ENCODE measurements at regions of chr18 and their contacts with region 1.

Region 1: GRCh38 chr18:35386600-35387351 is 9.6 kb upstream of the ZNF396 start:
- DNase-seq: peak in 8 of 9 donors; percentile 45 to 78 (median 72)
- ATAC-seq: peak; percentile 95
- H3K4me3 ChIP-seq: no peak overlapping the region
- H3K4me3 Mint-ChIP-seq: peak overlapping the region in 1 of 10 donors; percentile 26
- H3K27ac ChIP-seq: no peak overlapping the region
- H3K27ac Mint-ChIP-seq: peak overlapping the region in 1 of 9 donors; percentile 48
- H3K4me1 ChIP-seq: no peaks in the 10 kb centered on the region
- H3K4me1 Mint-ChIP-seq: peaks cover 0 to 11% (median 5%) of the 10 kb centered on the region in 7 donors
- H3K27me3 ChIP-seq: no peaks in the 10 kb centered on the region
- H3K27me3 Mint-ChIP-seq: peaks cover 13 to 41% (median 28%) of the 10 kb centered on the region in 5 donors

Region 2: DNA sequence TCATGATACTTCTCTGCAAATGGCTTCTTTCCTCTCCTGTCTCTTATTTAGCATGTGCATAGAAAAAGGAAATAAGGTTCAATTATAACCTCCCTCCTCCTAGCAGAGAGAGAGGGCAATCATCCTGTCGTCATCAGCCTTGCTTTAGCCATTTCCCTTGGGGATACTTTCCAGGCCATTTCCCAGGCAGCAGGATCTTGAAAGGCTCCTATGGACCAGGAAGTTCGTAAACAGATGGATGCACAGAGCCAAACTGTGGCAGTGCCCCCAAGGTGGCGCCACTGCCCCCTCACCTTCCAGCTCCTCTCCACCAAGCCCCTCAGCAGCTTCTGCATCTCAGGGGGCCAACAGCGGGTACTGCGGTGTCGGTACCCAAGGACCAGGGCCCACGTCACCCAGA is 519.3 kb before region 1 on chr18:
- CTCF ChIA-PET with region 1: no interaction called
- POLR2A ChIA-PET with region 1: no interaction called
- intact Hi-C with region 1: loop called in 1 of 2 experiments (anchors 5 kb)
- DNase-seq: no peak
- ATAC-seq: no peak
- H3K4me3 ChIP-seq: no peak overlapping the region
- H3K4me3 Mint-ChIP-seq: no peak overlapping the region
- H3K27ac ChIP-seq: no peak overlapping the region
- H3K27ac Mint-ChIP-seq: no peak overlapping the region
- H3K4me1 ChIP-seq: no peaks in the 10 kb centered on the region
- H3K4me1 Mint-ChIP-seq: peaks cover 0 to 24% (median 9%) of the 10 kb centered on the region in 7 donors
- H3K27me3 ChIP-seq: no peaks in the 10 kb centered on the region
- H3K27me3 Mint-ChIP-seq: peaks cover 0 to 10% (median 0%) of the 10 kb centered on the region in 5 donors

Region 3: GRCh38 chr18:35005963-35006577 is 380.7 kb before region 1 on chr18:
- CTCF ChIA-PET with region 1: interaction called, 3 read pairs
- POLR2A ChIA-PET with region 1: no interaction called
- intact Hi-C with region 1: loop called (anchors 2 kb)
- DNase-seq: peak in 7 of 9 donors; percentile 29 to 66 (median 54)
- ATAC-seq: peak; percentile 80
- H3K4me3 ChIP-seq: no peak overlapping the region
- H3K4me3 Mint-ChIP-seq: no peak overlapping the region
- H3K27ac ChIP-seq: no peak overlapping the region
- H3K27ac Mint-ChIP-seq: no peak overlapping the region
- H3K4me1 ChIP-seq: no peaks in the 10 kb centered on the region
- H3K4me1 Mint-ChIP-seq: no peaks in the 10 kb centered on the region
- H3K27me3 ChIP-seq: no peaks in the 10 kb centered on the region
- H3K27me3 Mint-ChIP-seq: no peaks in the 10 kb centered on the region

Region 4: DNA sequence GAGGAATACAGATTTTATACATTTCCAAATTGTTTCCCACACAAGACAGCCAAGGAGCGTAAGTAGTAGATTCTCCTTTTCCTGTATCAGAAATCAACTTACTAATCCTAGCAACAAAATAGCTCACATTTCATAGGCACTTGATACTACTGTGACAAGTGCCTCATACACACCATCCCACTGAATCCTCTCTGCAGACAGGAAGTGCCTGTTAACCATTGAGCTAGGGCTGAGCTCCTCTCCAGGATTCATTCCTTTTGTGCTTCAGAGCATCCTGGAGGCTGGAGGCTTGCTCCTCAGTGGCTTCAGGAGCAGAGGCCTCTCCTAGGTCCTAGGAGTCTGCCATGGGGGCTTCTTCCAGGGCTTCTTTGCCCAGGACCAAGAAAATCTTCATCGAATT is 11.2 kb after region 1 on chr18:
- CTCF ChIA-PET with region 1: no interaction called
- POLR2A ChIA-PET with region 1: no interaction called
- intact Hi-C with region 1: no loop called
- DNase-seq: no peak
- ATAC-seq: no peak
- H3K4me3 ChIP-seq: no peak overlapping the region
- H3K4me3 Mint-ChIP-seq: no peak overlapping the region
- H3K27ac ChIP-seq: no peak overlapping the region
- H3K27ac Mint-ChIP-seq: no peak overlapping the region
- H3K4me1 ChIP-seq: no peaks in the 10 kb centered on the region
- H3K4me1 Mint-ChIP-seq: no peaks in the 10 kb centered on the region
- H3K27me3 ChIP-seq: no peaks in the 10 kb centered on the region
- H3K27me3 Mint-ChIP-seq: peaks cover 11 to 33% (median 20%) of the 10 kb centered on the region in 5 donors

Region 5: GRCh38 chr18:35407871-35408481 is 21.2 kb after region 1 on chr18:
- CTCF ChIA-PET with region 1: no interaction called
- POLR2A ChIA-PET with region 1: no interaction called
- intact Hi-C with region 1: loop called in 1 of 2 experiments (anchors 2 kb)
- DNase-seq: peak in 7 of 9 donors; percentile 14 to 70 (median 60)
- ATAC-seq: peak; percentile 90
- H3K4me3 ChIP-seq: no peak overlapping the region
- H3K4me3 Mint-ChIP-seq: no peak overlapping the region
- H3K27ac ChIP-seq: no peak overlapping the region
- H3K27ac Mint-ChIP-seq: no peak overlapping the region
- H3K4me1 ChIP-seq: peaks cover 0 to 4% of the 10 kb centered on the region in 2 donors
- H3K4me1 Mint-ChIP-seq: peaks cover 10 to 35% (median 17%) of the 10 kb centered on the region in 7 donors
- H3K27me3 ChIP-seq: no peaks in the 10 kb centered on the region
- H3K27me3 Mint-ChIP-seq: peaks cover 0 to 15% (median 7%) of the 10 kb centered on the region in 5 donors

Region 6: DNA sequence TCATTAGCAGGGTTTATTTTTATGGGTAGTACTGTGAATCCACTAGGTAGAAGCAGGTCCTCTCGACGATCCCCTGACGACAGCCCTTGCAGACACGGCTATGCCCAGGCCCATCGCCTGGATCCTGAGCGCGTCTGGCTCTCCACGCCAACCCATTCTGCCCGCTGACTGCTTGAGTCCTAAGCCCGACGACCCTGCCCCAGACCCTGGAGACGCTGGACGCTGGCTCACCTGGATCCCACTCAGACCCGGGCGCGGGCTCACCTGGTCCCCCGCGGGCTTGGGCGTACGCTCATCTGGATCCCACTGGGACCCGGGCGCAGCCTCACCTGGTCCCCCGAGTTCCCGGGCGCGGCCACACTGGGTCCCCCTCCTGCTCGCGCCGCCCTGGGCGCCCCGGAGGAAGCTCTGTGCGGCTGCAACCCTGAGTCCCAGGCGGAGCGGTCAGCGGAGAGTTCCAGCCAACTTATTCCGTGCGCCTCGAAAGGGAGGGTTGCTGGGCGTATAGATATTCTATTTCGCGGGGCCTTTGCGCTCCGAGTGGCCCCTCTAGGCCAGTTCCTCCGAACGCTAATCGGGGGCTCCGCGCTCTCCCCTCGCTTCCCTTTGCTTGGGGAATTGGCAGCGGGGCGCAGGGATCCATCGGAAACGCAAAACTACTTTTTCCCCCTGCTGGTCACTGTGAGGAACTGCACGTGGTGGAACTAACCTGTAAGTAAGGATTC is 563.3 kb after region 1 on chr18:
- CTCF ChIA-PET with region 1: no interaction called
- POLR2A ChIA-PET with region 1: no interaction called
- intact Hi-C with region 1: loop called (anchors 1 to 5 kb)
- DNase-seq: peak; percentile 36 to 68 (median 57)
- ATAC-seq: peak; percentile 89
- H3K4me3 ChIP-seq: peak overlapping the region; percentile 70
- H3K4me3 Mint-ChIP-seq: peak overlapping the region; percentile 78 to 93 (median 88)
- H3K27ac ChIP-seq: no peak overlapping the region
- H3K27ac Mint-ChIP-seq: peak overlapping the region in 4 of 9 donors; percentile 21 to 59 (median 28)
- H3K4me1 ChIP-seq: peaks cover 4 to 8% of the 10 kb centered on the region in 2 donors
- H3K4me1 Mint-ChIP-seq: peaks cover 0 to 9% (median 4%) of the 10 kb centered on the region in 7 donors
- H3K27me3 ChIP-seq: peaks cover 0 to 4% of the 10 kb centered on the region in 2 donors
- H3K27me3 Mint-ChIP-seq: peaks cover 14 to 33% (median 24%) of the 10 kb centered on the region in 5 donors

Region 7: DNA sequence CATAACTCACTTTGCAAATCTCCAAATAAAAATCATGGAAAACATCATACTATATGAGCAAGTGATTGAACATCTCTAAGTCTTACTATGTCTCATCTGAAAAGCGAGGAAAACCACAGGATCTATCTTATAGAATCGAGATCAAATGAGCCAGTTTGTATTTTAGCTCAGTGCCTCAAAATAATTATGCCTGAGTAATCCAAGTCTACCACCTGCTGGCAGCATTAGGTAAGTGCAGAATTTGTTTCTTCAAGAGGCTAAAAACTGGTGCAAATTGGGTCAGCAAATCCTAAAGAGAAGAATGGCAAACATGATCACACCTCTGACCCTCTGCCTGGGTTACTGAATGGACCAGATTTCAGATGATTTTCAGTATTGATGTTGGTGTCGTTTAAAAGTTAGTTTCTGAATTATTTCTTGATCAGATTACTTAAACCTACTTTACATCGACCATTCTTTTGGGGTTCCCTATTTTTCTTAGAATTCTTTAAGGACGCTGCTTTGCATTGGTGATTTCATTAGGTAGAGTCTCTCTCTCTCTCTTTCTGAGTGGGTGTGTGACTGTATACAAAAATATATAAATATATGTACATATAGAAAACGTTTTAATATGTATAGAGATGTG is 898.0 kb after region 1 on chr18:
- CTCF ChIA-PET with region 1: no interaction called
- POLR2A ChIA-PET with region 1: no interaction called
- intact Hi-C with region 1: loop called in 1 of 2 experiments (anchors 1 kb)
- DNase-seq: peak in 7 of 9 donors; percentile 20 to 61 (median 54)
- ATAC-seq: peak; percentile 67
- H3K4me3 ChIP-seq: no peak overlapping the region
- H3K4me3 Mint-ChIP-seq: no peak overlapping the region
- H3K27ac ChIP-seq: no peak overlapping the region
- H3K27ac Mint-ChIP-seq: no peak overlapping the region
- H3K4me1 ChIP-seq: no peaks in the 10 kb centered on the region
- H3K4me1 Mint-ChIP-seq: peaks cover 0 to 4% (median 0%) of the 10 kb centered on the region in 7 donors
- H3K27me3 ChIP-seq: no peaks in the 10 kb centered on the region
- H3K27me3 Mint-ChIP-seq: peaks cover 30 to 59% (median 33%) of the 10 kb centered on the region in 5 donors

Region 8: GRCh38 chr18:36828630-36829361 is 1442.0 kb after region 1 on chr18 and contains the starts of genes KIAA1328 and TPGS2:
- CTCF ChIA-PET with region 1: no interaction called
- POLR2A ChIA-PET with region 1: no interaction called
- intact Hi-C with region 1: loop called in 1 of 2 experiments (anchors 5 kb)
- DNase-seq: peak; percentile 77 to 90 (median 87)
- ATAC-seq: peak; percentile 96
- H3K4me3 ChIP-seq: peak within 1 kb of the TSS; percentile 79
- H3K4me3 Mint-ChIP-seq: peak within 1 kb of the TSS; percentile 73 to 98 (median 92)
- H3K27ac ChIP-seq: peak within 1 kb of the TSS; percentile 75
- H3K27ac Mint-ChIP-seq: peak within 1 kb of the TSS; percentile 57 to 98 (median 90)
- H3K4me1 ChIP-seq: peaks cover 15 to 18% of the 10 kb centered on the region in 2 donors
- H3K4me1 Mint-ChIP-seq: peaks cover 27 to 60% (median 47%) of the 10 kb centered on the region in 7 donors
- H3K27me3 ChIP-seq: no peaks in the 10 kb centered on the region
- H3K27me3 Mint-ChIP-seq: no peaks in the 10 kb centered on the region
- total RNA-seq, gene KIAA1328: 8.1 to 17.6 (median 16.0) TPM
- total RNA-seq, gene TPGS2: 16.9 to 92.8 (median 53.5) TPM